ENCODE measurements at regions of chr4 and their contacts with region 1.

Region 1: GRCh38 chr4:147019061-147019460 is 73.4 kb upstream of the TTC29 start:
- DNase-seq: no peak
- H3K4me3 ChIP-seq: no peak overlapping the region
- H3K27ac ChIP-seq: no peak overlapping the region
- H3K4me1 ChIP-seq: no peaks in the 10 kb centered on the region
- H3K27me3 ChIP-seq: no peaks in the 10 kb centered on the region
- CTCF ChIP-seq: peak in 2 of 3 experiments; percentile 35 to 56
- POLR2A ChIP-seq: no peak

Region 2: DNA sequence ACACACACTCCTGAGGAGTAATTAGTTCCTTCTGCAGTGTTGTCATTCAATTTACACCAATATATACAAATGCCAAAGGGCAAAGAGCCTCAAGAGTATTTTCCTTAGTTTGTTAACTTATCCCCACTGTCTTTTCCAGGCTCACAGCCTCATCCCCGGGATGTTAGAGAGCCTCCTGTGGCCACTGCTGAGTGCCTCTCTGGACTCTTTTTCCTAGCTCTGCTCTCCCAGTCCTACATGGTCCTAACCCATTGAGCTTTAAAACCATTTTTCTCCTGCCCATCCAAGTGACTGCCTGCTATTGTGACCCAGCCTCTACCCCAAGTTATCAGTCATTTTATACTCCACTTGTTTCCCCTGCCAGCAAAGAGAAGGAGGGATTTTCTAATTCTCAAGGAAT is 49.9 kb before region 1 on chr4:
- intact Hi-C with region 1: no loop called
- DNase-seq: no peak
- H3K4me3 ChIP-seq: no peak overlapping the region
- H3K27ac ChIP-seq: no peak overlapping the region
- H3K4me1 ChIP-seq: no peaks in the 10 kb centered on the region
- H3K27me3 ChIP-seq: no peaks in the 10 kb centered on the region
- CTCF ChIP-seq: no peak
- POLR2A ChIP-seq: no peak

Region 3: DNA sequence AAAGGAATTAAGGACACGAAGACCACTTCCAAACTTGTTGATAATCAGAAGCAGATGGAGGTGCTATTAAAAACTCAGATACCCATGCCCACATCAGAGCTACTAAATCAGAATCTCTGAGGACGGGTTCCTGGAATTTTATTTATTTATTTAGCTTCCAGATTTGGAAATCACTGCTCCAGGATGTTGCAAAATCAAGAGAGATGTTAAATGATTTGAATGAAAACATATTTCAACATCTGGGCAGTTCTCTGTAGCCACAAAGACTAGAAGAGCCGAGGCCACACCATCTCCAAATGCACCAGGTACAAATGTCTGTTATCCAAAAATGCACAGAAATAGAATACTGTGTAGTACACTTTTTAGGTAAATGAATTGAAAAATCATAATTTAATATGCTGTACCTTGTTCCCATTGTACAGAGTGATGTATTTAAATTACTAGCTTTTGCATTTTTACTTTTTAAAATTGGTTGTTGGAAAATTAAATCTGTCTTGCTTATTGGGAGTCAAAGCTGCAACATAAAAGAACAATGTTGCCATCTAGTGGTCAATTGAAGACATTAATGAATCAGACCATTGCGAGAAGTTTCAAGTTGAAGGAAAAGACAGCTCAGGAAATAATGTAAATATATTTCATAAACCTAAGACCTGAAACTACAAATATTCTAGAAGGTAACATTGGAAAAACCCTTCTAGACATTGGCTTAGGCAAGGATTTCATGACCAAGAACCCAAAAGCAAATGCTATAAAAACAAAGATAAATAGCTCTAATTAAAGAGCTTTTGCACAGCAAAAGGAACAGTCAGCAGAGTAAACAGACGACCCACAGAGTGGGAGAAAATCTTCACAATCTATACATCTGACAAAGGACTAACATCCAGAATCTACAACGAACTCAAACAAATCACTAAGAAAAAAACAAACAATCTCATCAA is 77.9 kb after region 1 on chr4:
- intact Hi-C with region 1: loop called (anchors 5 kb)
- DNase-seq: no peak
- H3K4me3 ChIP-seq: no peak overlapping the region
- H3K27ac ChIP-seq: no peak overlapping the region
- H3K4me1 ChIP-seq: no peaks in the 10 kb centered on the region
- H3K27me3 ChIP-seq: no peaks in the 10 kb centered on the region
- CTCF ChIP-seq: peak in 2 of 3 experiments; percentile 55 to 85
- POLR2A ChIP-seq: no peak